Activated CD4-positive, alpha-beta T cell treated with anti-CD3 and anti-CD28 coated beads for 36 hours (primary cell): ENCODE measurements at regions of chr2 and their contacts with region 1.

Region 1: GRCh38 chr2:134668821-134669220 is 50.0 kb downstream of the TMEM163 start:
- DNase-seq: peak; percentile 89
- ATAC-seq: peak; percentile 92
- H3K4me3 Mint-ChIP-seq: no peak overlapping the region
- H3K27ac Mint-ChIP-seq: peak overlapping the region; percentile 32
- H3K4me1 Mint-ChIP-seq: peaks cover 67% of the 10 kb centered on the region
- H3K27me3 Mint-ChIP-seq: peaks cover 9% of the 10 kb centered on the region

Region 2: DNA sequence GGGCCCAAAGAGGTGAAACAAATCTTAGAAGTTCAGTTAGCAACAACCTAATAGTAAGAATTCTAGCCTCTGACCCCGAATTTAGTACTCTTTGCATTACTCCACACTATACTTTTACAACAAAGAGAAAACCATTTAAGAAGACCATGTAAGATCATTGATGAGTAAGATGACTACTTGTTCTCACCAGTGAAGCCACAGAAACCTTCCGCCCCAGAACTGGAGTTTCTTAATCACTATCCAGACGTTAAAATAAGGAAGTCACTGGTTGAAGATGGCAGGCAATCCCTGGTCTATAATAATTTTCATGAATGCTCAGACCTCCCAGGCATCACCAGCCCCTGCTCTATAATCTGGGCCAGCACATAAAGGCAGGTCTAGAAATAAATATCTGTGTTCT is 45.0 kb before region 1 on chr2:
- CTCF ChIA-PET with region 1: no interaction called
- POLR2A ChIA-PET with region 1: no interaction called
- intact Hi-C with region 1: no loop called
- DNase-seq: peak; percentile 69
- ATAC-seq: peak; percentile 88
- H3K4me3 Mint-ChIP-seq: no peak overlapping the region
- H3K27ac Mint-ChIP-seq: no peak overlapping the region
- H3K4me1 Mint-ChIP-seq: peaks cover 9% of the 10 kb centered on the region
- H3K27me3 Mint-ChIP-seq: peaks cover 7% of the 10 kb centered on the region

Region 3: DNA sequence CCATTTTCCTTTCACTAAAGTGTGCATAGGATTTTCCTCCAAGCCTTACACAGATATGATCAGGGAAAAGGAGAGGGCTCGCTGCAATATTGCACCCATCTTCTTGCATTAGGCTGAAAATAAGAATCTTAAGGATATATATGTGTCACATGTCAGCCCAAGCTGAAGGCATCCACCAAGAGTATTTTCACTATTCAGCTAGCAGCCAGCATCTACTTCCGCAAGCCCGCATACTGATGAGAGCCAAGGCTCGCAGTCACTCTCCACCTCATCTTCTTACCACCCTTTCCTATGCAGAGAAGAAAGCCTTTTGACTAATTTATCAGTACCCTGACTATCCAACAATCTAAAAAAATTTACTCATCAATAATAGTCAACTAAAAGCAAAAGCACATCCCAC is 43.9 kb after region 1 on chr2:
- CTCF ChIA-PET with region 1: no interaction called
- POLR2A ChIA-PET with region 1: no interaction called
- intact Hi-C with region 1: loop called (anchors 5 kb)
- DNase-seq: no peak
- ATAC-seq: no peak
- H3K4me3 Mint-ChIP-seq: no peak overlapping the region
- H3K27ac Mint-ChIP-seq: no peak overlapping the region
- H3K4me1 Mint-ChIP-seq: peaks cover 27% of the 10 kb centered on the region
- H3K27me3 Mint-ChIP-seq: peaks cover 50% of the 10 kb centered on the region